Activated CD4-positive, alpha-beta T cell treated with anti-CD3 and anti-CD28 coated beads for 36 hours (primary cell): ENCODE measurements at regions of chr6 and their contacts with region 1.

Region 1: GRCh38 chr6:139219271-139219729 is 72.5 kb downstream of the TXLNB start:
- DNase-seq: peak; percentile 86
- ATAC-seq: peak; percentile 100
- H3K4me3 Mint-ChIP-seq: no peak overlapping the region
- H3K27ac Mint-ChIP-seq: peak overlapping the region; percentile 73
- H3K4me1 Mint-ChIP-seq: peaks cover 10% of the 10 kb centered on the region
- H3K27me3 Mint-ChIP-seq: no peaks in the 10 kb centered on the region

Region 2: DNA sequence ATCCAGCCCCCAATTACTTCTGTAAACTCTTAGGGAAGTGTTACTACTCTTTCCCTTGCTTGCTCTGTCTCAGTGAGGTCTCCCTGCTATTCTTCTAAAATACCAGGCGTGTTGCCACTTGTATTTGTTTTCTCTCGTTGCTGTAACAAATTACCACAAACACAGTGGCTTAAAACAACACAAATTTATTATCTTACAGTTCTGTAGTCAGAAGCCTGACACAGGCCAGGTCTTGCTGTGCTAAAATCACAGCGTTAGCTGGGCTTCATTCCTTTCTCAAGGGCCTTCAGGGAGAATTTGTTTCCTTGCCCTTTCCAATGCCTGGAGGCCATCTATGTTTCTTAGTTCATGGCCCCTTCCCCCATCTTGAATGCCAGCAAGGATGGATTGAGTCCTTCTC is 24.5 kb before region 1 on chr6:
- CTCF ChIA-PET with region 1: interaction called, 10 read pairs
- POLR2A ChIA-PET with region 1: no interaction called
- intact Hi-C with region 1: no loop called
- DNase-seq: no peak
- ATAC-seq: no peak
- H3K4me3 Mint-ChIP-seq: no peak overlapping the region
- H3K27ac Mint-ChIP-seq: no peak overlapping the region
- H3K4me1 Mint-ChIP-seq: no peaks in the 10 kb centered on the region
- H3K27me3 Mint-ChIP-seq: no peaks in the 10 kb centered on the region

Region 3: GRCh38 chr6:139230391-139230840 is 11.1 kb after region 1 on chr6:
- CTCF ChIA-PET with region 1: interaction called, 13 read pairs
- POLR2A ChIA-PET with region 1: no interaction called
- intact Hi-C with region 1: no loop called
- DNase-seq: peak; percentile 22
- ATAC-seq: peak; percentile 30
- H3K4me3 Mint-ChIP-seq: no peak overlapping the region
- H3K27ac Mint-ChIP-seq: no peak overlapping the region
- H3K4me1 Mint-ChIP-seq: peaks cover 7% of the 10 kb centered on the region
- H3K27me3 Mint-ChIP-seq: no peaks in the 10 kb centered on the region

Region 4: DNA sequence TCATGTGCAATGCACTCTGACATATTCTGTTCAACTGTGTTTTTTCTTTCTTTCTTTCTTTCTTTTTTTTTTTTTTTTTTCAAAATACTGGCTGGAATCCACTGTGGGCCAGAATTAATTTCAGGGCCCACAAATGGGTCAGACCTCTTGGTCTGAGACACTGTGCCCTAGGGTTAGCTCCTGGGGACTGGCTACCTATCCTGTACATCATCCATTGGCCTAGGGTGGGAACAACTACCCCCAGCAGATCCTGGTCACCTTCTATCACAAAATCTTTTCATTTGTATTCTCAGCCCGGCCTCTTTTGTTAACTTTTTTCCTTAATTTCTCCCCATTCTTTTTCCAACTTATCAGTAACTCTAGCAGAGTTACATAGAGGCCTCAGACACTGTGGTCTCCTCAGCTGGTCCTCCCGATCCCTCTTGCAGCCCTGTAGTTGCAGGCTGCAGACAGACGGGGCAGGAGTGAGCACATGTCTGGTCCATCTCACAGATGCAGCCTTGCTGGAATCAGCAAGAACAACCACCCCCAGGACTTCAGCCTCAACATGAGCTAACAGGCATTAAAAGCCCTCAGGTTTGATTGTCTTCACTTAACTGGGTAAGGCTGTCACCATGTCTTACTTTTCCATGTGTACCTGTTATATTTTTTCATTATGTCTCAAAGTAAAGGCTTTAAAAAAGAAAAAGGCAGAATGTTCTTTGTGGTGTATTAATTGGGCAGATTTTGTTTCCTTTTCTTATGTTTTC is 31.2 kb after region 1 on chr6:
- CTCF ChIA-PET with region 1: interaction called, 16 read pairs
- POLR2A ChIA-PET with region 1: no interaction called
- intact Hi-C with region 1: loop called in 1 of 2 experiments (anchors 5 kb)
- DNase-seq: peak; percentile 76
- ATAC-seq: peak; percentile 83
- H3K4me3 Mint-ChIP-seq: no peak overlapping the region
- H3K27ac Mint-ChIP-seq: peak overlapping the region; percentile 76
- H3K4me1 Mint-ChIP-seq: peaks cover 52% of the 10 kb centered on the region
- H3K27me3 Mint-ChIP-seq: no peaks in the 10 kb centered on the region

Region 5: GRCh38 chr6:139349464-139350020 is 130.2 kb after region 1 on chr6:
- CTCF ChIA-PET with region 1: interaction called, 13 read pairs
- POLR2A ChIA-PET with region 1: no interaction called
- intact Hi-C with region 1: no loop called
- DNase-seq: no peak
- ATAC-seq: no peak
- H3K4me3 Mint-ChIP-seq: no peak overlapping the region
- H3K27ac Mint-ChIP-seq: no peak overlapping the region
- H3K4me1 Mint-ChIP-seq: no peaks in the 10 kb centered on the region
- H3K27me3 Mint-ChIP-seq: no peaks in the 10 kb centered on the region

Region 6: DNA sequence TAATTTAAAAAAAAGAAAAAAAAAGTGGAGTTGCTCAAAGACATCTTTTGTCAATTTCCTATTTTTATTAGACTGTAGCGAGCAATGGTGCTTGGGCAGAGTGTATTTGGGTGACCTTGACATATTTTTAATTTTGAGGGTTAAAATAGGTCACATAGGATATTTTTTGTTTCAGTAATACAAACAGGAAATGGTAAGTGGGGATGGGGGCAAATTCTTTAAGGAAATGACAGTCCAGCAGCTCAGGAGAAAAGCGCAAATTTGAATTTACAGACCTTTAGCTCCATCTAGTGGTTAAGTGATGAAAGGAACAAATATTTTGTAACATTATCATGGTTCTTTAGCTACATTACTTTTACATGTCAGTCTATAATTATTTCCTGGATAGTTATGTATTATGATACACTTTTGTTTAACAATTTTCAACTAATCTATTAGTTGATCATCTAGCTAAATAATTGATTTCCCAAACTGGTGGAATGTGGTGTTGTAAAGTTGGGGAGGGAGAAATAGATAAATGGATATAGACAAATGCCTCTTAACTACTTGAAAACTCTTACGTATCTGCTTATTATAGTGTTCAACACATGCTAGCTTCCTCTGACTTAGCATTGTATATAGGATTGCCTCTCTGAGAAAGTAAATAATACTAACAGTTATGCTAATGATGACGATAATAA is 145.1 kb after region 1 on chr6:
- CTCF ChIA-PET with region 1: interaction called, 113 read pairs
- POLR2A ChIA-PET with region 1: interaction called, 4 read pairs
- intact Hi-C with region 1: loop called (anchors 1 kb)
- DNase-seq: no peak
- ATAC-seq: peak; percentile 57
- H3K4me3 Mint-ChIP-seq: no peak overlapping the region
- H3K27ac Mint-ChIP-seq: no peak overlapping the region
- H3K4me1 Mint-ChIP-seq: peaks cover 25% of the 10 kb centered on the region
- H3K27me3 Mint-ChIP-seq: no peaks in the 10 kb centered on the region